MCF 10A (cell line): ENCODE measurements at regions of chr2 and their contacts with region 1.

Region 1: DNA sequence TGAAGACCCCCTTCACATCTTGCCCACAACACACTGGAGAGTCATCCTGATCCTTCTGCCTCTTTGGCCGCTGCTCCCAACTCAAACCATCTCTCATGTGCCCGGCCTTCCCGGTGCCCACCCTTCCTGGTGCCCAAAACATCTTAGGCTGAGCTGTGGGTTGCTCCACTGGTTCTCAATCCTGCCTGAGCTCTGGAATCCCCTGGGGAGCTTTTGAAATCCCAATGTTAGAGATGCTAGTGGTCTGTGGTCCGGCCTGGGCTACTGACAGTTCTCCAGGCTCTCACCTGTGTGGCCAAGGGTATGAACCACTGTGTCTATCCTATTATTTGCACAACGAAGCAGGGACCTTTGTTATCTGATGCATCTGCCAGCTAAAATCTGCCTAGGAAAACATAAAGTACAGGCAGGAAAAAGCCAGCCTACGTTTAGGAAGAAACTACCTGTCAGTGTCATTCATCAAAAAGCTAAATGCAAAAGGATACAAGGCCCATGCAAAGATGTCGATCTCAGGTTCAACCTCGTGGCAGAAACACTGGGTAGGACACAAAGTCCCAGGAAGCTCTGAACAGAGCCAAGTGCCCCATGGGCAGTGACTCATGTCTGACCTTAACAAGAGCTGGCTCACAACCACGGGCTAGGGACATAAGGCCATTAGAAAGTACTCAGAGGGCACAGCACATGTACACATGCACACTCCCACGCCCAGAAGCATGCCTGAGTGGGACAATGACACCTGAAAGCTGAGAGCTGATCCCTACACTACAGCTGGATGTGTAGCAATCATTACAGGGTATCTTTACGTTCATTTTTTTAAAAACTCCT is 30.8 kb downstream of the TBC1D8 start:
- DNase-seq: peak; percentile 99
- H3K4me3 Mint-ChIP-seq: peak overlapping the region; percentile 40
- H3K27ac Mint-ChIP-seq: peak overlapping the region; percentile 89
- H3K4me1 Mint-ChIP-seq: peaks cover 52% of the 10 kb centered on the region
- H3K27me3 Mint-ChIP-seq: no peaks in the 10 kb centered on the region
- CTCF ChIP-seq: no peak

Region 2: DNA sequence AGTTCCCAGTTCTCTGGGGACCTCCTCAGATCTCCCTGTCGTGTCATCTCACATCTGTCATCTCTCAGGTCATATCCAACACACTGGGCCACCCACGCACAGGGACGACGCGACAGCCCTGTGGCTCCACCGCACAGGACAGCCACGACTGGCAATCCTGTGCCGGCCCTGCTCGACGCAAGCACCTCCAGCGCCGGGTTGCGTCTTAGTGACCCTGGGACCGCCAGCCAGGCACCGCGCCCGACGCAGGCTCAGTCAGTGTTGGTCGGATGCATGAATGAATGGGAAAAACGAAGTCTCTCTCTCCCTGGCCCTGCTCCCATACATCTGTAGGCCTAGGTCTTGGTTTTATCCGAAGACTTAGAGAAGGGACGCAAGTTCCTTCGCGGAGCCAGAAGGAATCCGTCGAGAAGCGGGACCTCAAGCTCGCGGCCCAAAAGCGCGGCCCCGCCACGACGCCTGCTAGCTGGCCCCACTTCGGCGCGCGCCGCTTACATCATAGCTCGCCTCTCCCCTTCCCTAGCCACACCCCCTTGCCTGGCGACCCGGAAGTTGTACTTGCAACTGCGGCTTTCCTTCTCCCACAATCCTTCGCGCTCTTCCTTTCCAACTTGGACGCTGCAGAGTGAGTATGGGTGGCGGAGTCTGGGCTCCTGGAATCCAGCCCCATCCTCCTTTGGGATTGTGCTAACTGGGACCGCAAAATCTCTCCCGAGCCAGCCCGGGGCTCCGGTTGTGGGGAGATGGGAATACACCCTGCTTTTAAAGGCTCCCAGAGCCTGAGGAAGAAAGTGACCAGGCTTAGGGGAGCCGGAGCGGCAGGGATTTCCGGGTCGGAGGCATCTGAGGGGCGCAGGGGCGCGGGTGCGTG is 118.5 kb before region 1 on chr2 and contains the start of gene RPL31:
- CTCF ChIA-PET with region 1: no interaction called
- POLR2A ChIA-PET with region 1: interaction called, 15 read pairs
- intact Hi-C with region 1: no loop called
- DNase-seq: peak; percentile 98
- H3K4me3 Mint-ChIP-seq: peak within 1 kb of the TSS; percentile 92
- H3K27ac Mint-ChIP-seq: peak within 1 kb of the TSS; percentile 99
- H3K4me1 Mint-ChIP-seq: peaks cover 19% of the 10 kb centered on the region
- H3K27me3 Mint-ChIP-seq: no peaks in the 10 kb centered on the region
- CTCF ChIP-seq: no peak
- total RNA-seq, gene RPL31: 1,648 and 1,732 TPM in 2 replicates

Region 3: DNA sequence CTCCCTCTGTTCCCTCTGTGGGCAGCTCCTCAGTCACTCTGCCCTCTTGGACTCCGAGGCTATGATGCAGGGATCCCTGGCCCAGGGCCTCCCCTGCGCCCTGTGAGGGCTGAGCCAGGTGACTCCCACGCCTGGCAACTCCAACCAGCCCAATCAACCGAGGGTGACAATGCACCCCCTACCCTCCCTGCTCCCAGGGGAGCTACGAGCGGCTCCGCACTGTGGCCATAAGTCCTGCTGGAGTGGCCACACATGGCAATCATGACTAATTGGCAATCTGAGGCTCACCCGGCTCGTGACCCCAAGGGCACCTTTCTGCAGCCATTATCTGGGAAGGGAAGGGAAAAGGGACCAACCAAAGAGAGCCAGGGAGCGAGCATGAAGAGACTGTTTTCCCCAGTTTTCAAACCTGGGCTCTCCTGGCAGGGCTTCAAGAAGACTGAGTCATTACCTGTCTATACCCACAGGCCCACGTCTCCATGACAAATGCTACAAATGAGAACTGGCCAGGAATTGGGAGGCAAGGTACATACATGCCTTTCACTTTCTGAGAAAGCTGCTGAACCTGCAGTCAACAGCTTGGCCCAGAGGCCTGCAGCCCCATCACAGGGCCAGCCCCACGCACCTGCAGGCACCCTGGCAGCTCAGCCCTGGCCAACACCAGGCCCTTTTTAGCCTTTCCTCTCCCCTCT is 73.2 kb before region 1 on chr2:
- CTCF ChIA-PET with region 1: interaction called, 4 read pairs
- POLR2A ChIA-PET with region 1: interaction called, 11 read pairs
- intact Hi-C with region 1: loop called (anchors 5 kb)
- DNase-seq: peak; percentile 97
- H3K4me3 Mint-ChIP-seq: no peak overlapping the region
- H3K27ac Mint-ChIP-seq: peak overlapping the region; percentile 91
- H3K4me1 Mint-ChIP-seq: peaks cover 13% of the 10 kb centered on the region
- H3K27me3 Mint-ChIP-seq: no peaks in the 10 kb centered on the region
- CTCF ChIP-seq: no peak

Region 4: GRCh38 chr2:101145406-101145805 is 25.0 kb after region 1 on chr2:
- CTCF ChIA-PET with region 1: interaction called, 40 read pairs
- POLR2A ChIA-PET with region 1: interaction called, 275 read pairs
- intact Hi-C with region 1: loop called (anchors 2 kb)
- DNase-seq: peak; percentile 71
- H3K4me3 Mint-ChIP-seq: peak overlapping the region; percentile 56
- H3K27ac Mint-ChIP-seq: peak overlapping the region; percentile 61
- H3K4me1 Mint-ChIP-seq: peaks cover 77% of the 10 kb centered on the region
- H3K27me3 Mint-ChIP-seq: no peaks in the 10 kb centered on the region
- CTCF ChIP-seq: no peak